ENCODE measurements at regions of chr2 and their contacts with region 1.

Region 1: GRCh38 chr2:44361330-44362206 is at the starts of genes CAMKMT and PREPL:
- DNase-seq: peak; percentile 96 to 99
- ATAC-seq: peak; percentile 88 to 95 (median 90)
- H3K4me3 ChIP-seq: peak within 1 kb of the TSS; percentile 75
- H3K4me3 Mint-ChIP-seq: peak within 1 kb of the TSS; percentile 99
- H3K27ac ChIP-seq: peak within 1 kb of the TSS; percentile 91
- H3K27ac Mint-ChIP-seq: peak within 1 kb of the TSS; percentile 95 to 99
- H3K4me1 ChIP-seq: peaks cover 7% of the 10 kb centered on the region
- H3K4me1 Mint-ChIP-seq: peaks cover 32 to 47% of the 10 kb centered on the region in 2 donors
- H3K27me3 ChIP-seq: no peaks in the 10 kb centered on the region
- H3K27me3 Mint-ChIP-seq: no peaks in the 10 kb centered on the region
- CTCF ChIP-seq: no peak
- total RNA-seq, gene CAMKMT: 18.1 to 25.0 (median 20.6) TPM
- total RNA-seq, gene PREPL: 17.2 to 23.2 (median 18.4) TPM

Region 2: GRCh38 chr2:43685357-43685756 is 676.2 kb before region 1 on chr2:
- intact Hi-C with region 1: no loop called
- DNase-seq: no peak
- ATAC-seq: no peak
- H3K4me3 ChIP-seq: no peak overlapping the region
- H3K4me3 Mint-ChIP-seq: no peak overlapping the region
- H3K27ac ChIP-seq: no peak overlapping the region
- H3K27ac Mint-ChIP-seq: no peak overlapping the region
- H3K4me1 ChIP-seq: no peaks in the 10 kb centered on the region
- H3K4me1 Mint-ChIP-seq: no peaks in the 10 kb centered on the region
- H3K27me3 ChIP-seq: peaks cover 2% of the 10 kb centered on the region
- H3K27me3 Mint-ChIP-seq: peaks cover 7 to 40% of the 10 kb centered on the region in 2 donors
- CTCF ChIP-seq: no peak

Region 3: GRCh38 chr2:43995733-43996533 is 365.6 kb before region 1 on chr2 and contains the start of gene LRPPRC:
- intact Hi-C with region 1: loop called (anchors 1 kb)
- DNase-seq: peak; percentile 78 to 96
- ATAC-seq: peak; percentile 94 to 98 (median 95)
- H3K4me3 ChIP-seq: peak within 1 kb of the TSS; percentile 94
- H3K4me3 Mint-ChIP-seq: peak within 1 kb of the TSS; percentile 91
- H3K27ac ChIP-seq: peak within 1 kb of the TSS; percentile 89
- H3K27ac Mint-ChIP-seq: peak within 1 kb of the TSS; percentile 93 to 97
- H3K4me1 ChIP-seq: peaks cover 21% of the 10 kb centered on the region
- H3K4me1 Mint-ChIP-seq: peaks cover 44 to 52% of the 10 kb centered on the region in 2 donors
- H3K27me3 ChIP-seq: no peaks in the 10 kb centered on the region
- H3K27me3 Mint-ChIP-seq: peaks cover 0 to 3% of the 10 kb centered on the region in 2 donors
- CTCF ChIP-seq: no peak
- total RNA-seq, gene LRPPRC: 43.5 to 53.8 (median 48.4) TPM